PC-3 (cell line): ENCODE measurements at regions of chr1 and their contacts with region 1.

Region 1: GRCh38 chr1:187280031-187280430 is 451.3 kb downstream of the PLA2G4A start:
- DNase-seq: no peak
- ATAC-seq: no peak
- H3K4me3 ChIP-seq: no peak overlapping the region
- H3K27ac ChIP-seq: no peak overlapping the region
- H3K4me1 ChIP-seq: peaks cover 7% of the 10 kb centered on the region; the same call in 1 of the 2 replicates
- H3K27me3 ChIP-seq: no peaks in the 10 kb centered on the region
- CTCF ChIP-seq: no peak

Region 2: GRCh38 chr1:187306710-187307415 is 26.8 kb after region 1 on chr1:
- CTCF ChIA-PET with region 1: no interaction called
- POLR2A ChIA-PET with region 1: no interaction called
- intact Hi-C with region 1: loop called (anchors 2 kb)
- DNase-seq: peak; percentile 68
- ATAC-seq: peak; percentile 92
- H3K4me3 ChIP-seq: peak overlapping the region; percentile 51; the same call in 1 of the 2 replicates
- H3K27ac ChIP-seq: peak overlapping the region; percentile 62
- H3K4me1 ChIP-seq: peaks cover 11% of the 10 kb centered on the region; the same call in 1 of the 2 replicates
- H3K27me3 ChIP-seq: no peaks in the 10 kb centered on the region
- CTCF ChIP-seq: no peak